Calu3 (cell line): ENCODE measurements at regions of chr16 and their contacts with region 1.

Region 1: GRCh38 chr16:29700253-29700987 is 21.4 kb downstream of the QPRT start:
- DNase-seq: peak; percentile 87
- H3K4me3 Mint-ChIP-seq: no peak overlapping the region
- H3K27ac Mint-ChIP-seq: peak overlapping the region; percentile 18
- H3K4me1 Mint-ChIP-seq: peaks cover 16% of the 10 kb centered on the region
- H3K27me3 Mint-ChIP-seq: peaks cover 30% of the 10 kb centered on the region
- CTCF ChIP-seq: peak; percentile 93

Region 2: DNA sequence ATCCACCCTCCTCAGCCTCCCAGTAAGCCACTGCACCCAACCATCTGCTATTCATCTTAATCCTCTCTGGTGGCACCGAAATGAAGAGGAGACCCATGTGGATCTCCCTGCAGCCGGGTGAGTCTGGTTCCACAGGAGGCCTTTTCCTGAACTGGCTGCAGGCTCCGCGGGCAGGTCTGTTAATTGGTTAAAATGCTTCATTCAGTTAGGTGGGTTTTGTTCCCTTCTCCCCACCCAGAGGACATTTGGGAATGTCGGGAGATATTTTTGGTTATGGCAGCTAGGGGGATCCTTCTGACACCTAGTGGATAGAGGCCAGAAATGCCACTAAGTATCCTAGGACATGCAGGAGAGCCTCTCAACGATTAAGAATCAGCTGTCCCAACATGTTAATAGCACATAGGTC is 28.7 kb after region 1 on chr16:
- CTCF ChIA-PET with region 1: interaction called, 16 read pairs
- intact Hi-C with region 1: no loop called
- DNase-seq: peak; percentile 20
- H3K4me3 Mint-ChIP-seq: no peak overlapping the region
- H3K27ac Mint-ChIP-seq: no peak overlapping the region
- H3K4me1 Mint-ChIP-seq: peaks cover 14% of the 10 kb centered on the region
- H3K27me3 Mint-ChIP-seq: peaks cover 13% of the 10 kb centered on the region
- CTCF ChIP-seq: peak; percentile 59

Region 3: GRCh38 chr16:29815793-29816693 is 115.6 kb after region 1 on chr16 and contains the start of gene PAGR1:
- CTCF ChIA-PET with region 1: interaction called, 12 read pairs
- intact Hi-C with region 1: loop called (anchors 10 kb)
- DNase-seq: peak; percentile 98
- H3K4me3 Mint-ChIP-seq: peak within 1 kb of the TSS; percentile 96
- H3K27ac Mint-ChIP-seq: peak within 1 kb of the TSS; percentile 94
- H3K4me1 Mint-ChIP-seq: peaks cover 42% of the 10 kb centered on the region
- H3K27me3 Mint-ChIP-seq: peaks cover 39% of the 10 kb centered on the region
- CTCF ChIP-seq: peak; percentile 94
- total RNA-seq, gene PAGR1: 30.4 and 32.0 TPM in 2 replicates

Region 4: GRCh38 chr16:30024451-30024850 is 324.0 kb after region 1 on chr16:
- CTCF ChIA-PET with region 1: no interaction called
- intact Hi-C with region 1: loop called (anchors 5 kb)
- DNase-seq: no peak
- H3K4me3 Mint-ChIP-seq: no peak overlapping the region
- H3K27ac Mint-ChIP-seq: no peak overlapping the region
- H3K4me1 Mint-ChIP-seq: peaks cover 18% of the 10 kb centered on the region
- H3K27me3 Mint-ChIP-seq: peaks cover 61% of the 10 kb centered on the region
- CTCF ChIP-seq: no peak

Region 5: GRCh38 chr16:31108035-31108793 is 1407.8 kb after region 1 on chr16 and contains the start of gene BCKDK:
- CTCF ChIA-PET with region 1: no interaction called
- intact Hi-C with region 1: no loop called
- DNase-seq: peak; percentile 76
- H3K4me3 Mint-ChIP-seq: peak within 1 kb of the TSS; percentile 64
- H3K27ac Mint-ChIP-seq: peak within 1 kb of the TSS; percentile 74
- H3K4me1 Mint-ChIP-seq: peaks cover 31% of the 10 kb centered on the region
- H3K27me3 Mint-ChIP-seq: no peaks in the 10 kb centered on the region
- CTCF ChIP-seq: no peak
- total RNA-seq, gene BCKDK: 49.3 and 52.0 TPM in 2 replicates